Testis (tissue), 5 donors: ENCODE measurements at regions of chr22 and their contacts with region 1.

Region 1: DNA sequence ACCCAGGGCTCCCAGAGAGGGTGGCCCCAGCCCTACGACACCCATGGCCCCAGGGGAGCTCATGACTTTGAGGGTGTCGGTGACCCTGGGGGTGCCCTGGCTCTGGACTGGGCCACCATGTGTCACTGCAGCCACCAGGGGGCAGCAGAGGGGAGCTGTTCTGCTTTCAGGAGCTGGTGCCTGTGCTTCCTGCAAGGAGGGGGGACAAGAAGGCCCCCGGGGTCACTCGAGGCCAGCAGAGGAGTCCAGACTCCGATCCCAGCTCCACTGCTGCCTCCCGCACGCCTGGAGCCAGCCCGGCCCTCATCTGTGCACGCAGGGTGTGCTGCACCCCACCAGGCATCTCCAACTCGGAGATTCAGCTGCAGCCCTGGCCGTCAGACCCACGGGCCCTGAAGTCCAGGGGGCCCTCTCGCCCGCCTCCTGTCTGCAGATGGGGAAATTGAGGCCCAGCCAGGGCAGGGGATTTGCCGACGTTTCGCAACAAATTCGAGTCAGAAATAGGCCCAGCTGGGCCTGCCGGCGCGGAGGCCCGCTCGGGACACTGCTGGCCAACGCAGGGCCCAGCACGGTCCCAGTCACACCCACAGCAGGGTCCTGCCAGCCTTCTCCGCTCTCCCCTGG is 29.5 kb upstream of the WNT7B start:
- DNase-seq: peak; percentile 97
- H3K4me3 ChIP-seq: no peak overlapping the region
- H3K27ac ChIP-seq: peak overlapping the region; percentile 89 to 91
- H3K4me1 ChIP-seq: peaks cover 43% of the 10 kb centered on the region
- H3K27me3 ChIP-seq: no peaks in the 10 kb centered on the region
- CTCF ChIP-seq: peak; percentile 96 to 98 (median 98)
- POLR2A ChIP-seq: no peak

Region 2: DNA sequence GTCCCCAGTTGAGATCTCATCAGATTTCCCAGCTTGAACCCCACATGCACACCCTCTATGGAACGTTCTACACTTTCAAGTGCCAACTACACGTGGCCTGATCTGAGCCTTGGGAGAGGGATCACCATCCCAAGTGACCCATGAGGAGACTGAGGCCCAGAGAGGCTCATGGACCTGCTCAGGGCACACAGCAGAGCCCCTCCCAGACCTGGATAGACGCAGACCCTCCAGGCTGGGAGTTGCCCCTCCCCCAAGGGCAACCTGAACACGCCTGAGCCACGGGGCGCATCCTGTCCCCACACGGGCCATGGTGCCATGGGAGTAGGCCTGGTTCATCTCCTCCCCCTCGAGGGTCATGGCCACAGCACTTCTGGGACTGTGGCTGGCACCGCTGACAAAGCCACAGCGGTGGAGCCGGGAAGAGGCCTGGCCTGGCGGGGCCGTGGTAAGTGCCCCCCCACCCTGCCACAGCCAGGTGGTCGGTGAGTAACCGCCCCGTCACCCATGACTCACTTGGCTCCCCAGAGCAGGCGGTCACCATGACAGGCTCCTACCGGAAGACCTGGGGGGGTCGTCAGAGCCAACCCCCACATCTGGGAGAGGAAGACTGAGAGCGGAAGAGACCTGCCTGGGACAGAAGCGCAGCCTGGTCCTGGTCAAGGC is 37.6 kb before region 1 on chr22:
- intact Hi-C with region 1: no loop called
- DNase-seq: no peak
- H3K4me3 ChIP-seq: no peak overlapping the region
- H3K27ac ChIP-seq: no peak overlapping the region
- H3K4me1 ChIP-seq: peaks cover 11% of the 10 kb centered on the region
- H3K27me3 ChIP-seq: no peaks in the 10 kb centered on the region
- CTCF ChIP-seq: no peak
- POLR2A ChIP-seq: no peak

Region 3: GRCh38 chr22:46116491-46116958 is 110.0 kb after region 1 on chr22:
- intact Hi-C with region 1: loop called (anchors 5 kb)
- DNase-seq: peak; percentile 96
- H3K4me3 ChIP-seq: no peak overlapping the region
- H3K27ac ChIP-seq: peak overlapping the region; percentile 59 to 83
- H3K4me1 ChIP-seq: peaks cover 75% of the 10 kb centered on the region
- H3K27me3 ChIP-seq: no peaks in the 10 kb centered on the region
- CTCF ChIP-seq: peak; percentile 81 to 90 (median 87)
- POLR2A ChIP-seq: no peak